PC-3 (cell line): ENCODE measurements at regions of chr16 and their contacts with region 1.

Region 1: DNA sequence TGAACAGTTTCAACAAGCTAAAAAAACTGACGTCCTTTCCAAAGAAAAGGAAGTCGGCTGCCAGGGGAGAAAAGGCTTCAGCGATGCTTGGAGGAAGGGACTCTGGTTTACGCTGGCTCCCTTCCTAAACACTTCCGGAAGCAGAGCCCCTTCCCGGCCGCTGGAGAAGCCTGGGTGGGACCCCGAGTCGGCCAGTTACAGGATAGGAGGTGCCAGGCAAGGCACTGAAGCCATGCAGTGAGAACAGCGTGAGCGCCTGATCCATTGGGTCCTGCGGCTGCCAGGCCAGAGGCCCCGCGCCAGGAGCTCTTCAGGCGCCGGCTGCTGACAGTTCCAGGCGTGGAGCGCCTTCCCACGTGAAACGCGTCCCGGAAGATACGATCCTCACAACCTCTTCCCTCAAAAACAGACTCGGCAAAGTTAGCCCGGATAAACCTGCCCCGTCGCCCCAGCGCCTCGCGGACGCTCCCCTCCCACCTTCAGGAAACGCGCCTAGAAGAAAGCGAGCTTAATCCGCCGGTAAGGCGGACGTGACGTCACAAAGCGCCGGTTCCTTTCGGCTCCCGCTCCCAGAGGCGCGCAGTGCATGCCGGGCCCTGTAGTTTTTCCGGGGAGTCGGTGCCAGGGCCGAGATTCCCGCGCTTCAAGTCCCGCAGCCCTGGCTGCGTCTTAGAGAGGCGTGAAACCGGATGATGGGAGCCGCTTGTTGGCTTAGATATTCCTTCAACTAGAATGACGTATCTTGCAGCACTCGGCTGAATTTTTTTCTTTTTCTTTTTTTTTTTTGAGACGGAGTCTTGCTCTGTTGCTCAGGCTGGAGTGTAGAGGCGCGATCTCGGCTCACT is at the start of gene ADAT1:
- DNase-seq: peak; percentile 96
- ATAC-seq: peak; percentile 94
- H3K4me3 ChIP-seq: peak within 1 kb of the TSS; percentile 96
- H3K27ac ChIP-seq: peak within 1 kb of the TSS; percentile 68
- H3K4me1 ChIP-seq: peaks cover 11% of the 10 kb centered on the region; the same call in 1 of the 2 replicates
- H3K27me3 ChIP-seq: no peaks in the 10 kb centered on the region
- CTCF ChIP-seq: no peak
- total RNA-seq, gene ADAT1: 42.8 and 60.1 TPM in 2 replicates

Region 2: DNA sequence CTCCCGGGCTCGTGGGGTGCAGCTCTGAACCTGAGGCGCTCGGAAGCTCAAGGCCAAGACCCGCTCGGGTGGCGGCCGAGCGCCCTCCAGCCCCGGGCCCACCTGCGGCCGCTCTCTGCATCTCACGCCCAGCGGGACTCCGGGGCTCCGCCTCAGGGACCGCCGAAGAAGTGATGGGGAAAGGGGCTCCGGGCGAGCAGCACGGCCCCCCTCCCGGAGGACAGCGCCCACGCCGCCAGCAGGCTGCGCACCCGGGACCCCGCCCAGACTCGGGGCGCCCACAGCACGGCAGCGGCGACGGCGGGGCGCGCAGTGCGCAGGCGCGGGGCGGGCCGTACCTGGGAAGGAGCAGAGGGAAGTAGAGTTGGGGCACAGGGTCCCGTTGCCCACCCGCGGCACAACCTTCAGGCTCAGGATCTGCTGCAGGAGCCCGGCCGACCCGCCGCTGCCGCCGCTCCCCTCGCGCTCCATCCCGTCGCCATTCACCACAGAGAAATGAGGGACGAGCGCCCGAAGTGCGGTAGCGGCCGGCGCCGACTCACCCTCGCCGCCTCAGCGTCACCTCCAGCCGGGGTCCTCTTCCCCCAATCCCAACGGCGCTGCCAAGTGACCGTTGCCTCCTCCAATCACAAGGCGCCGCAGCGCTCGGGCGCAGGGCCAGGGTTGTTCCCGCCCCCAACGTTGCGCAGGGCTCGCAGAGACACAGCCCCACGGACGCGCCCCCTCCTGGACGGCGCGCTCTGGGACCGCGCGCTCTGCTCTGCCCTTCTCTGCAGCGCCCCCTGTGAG is 158.7 kb before region 1 on chr16 and contains the start of gene TMEM170A:
- CTCF ChIA-PET with region 1: no interaction called
- POLR2A ChIA-PET with region 1: no interaction called
- intact Hi-C with region 1: loop called (anchors 5 kb)
- DNase-seq: peak; percentile 96
- ATAC-seq: peak; percentile 92
- H3K4me3 ChIP-seq: peak within 1 kb of the TSS; percentile 89
- H3K27ac ChIP-seq: peak within 1 kb of the TSS; percentile 64
- H3K4me1 ChIP-seq: peaks cover 17% of the 10 kb centered on the region; the same call in 1 of the 2 replicates
- H3K27me3 ChIP-seq: no peaks in the 10 kb centered on the region
- CTCF ChIP-seq: peak; percentile 98
- total RNA-seq, gene TMEM170A: 10.1 and 18.6 TPM in 2 replicates

Region 3: GRCh38 chr16:75555707-75556430 is 67.1 kb before region 1 on chr16 and contains the start of gene TMEM231:
- CTCF ChIA-PET with region 1: no interaction called
- POLR2A ChIA-PET with region 1: no interaction called
- intact Hi-C with region 1: loop called (anchors 5 kb)
- DNase-seq: peak; percentile 83
- ATAC-seq: peak; percentile 88
- H3K4me3 ChIP-seq: peak within 1 kb of the TSS; percentile 96
- H3K27ac ChIP-seq: peak within 1 kb of the TSS; percentile 37
- H3K4me1 ChIP-seq: peaks cover 5% of the 10 kb centered on the region; the same call in 1 of the 2 replicates
- H3K27me3 ChIP-seq: no peaks in the 10 kb centered on the region
- CTCF ChIP-seq: no peak
- total RNA-seq, gene TMEM231: 9.6 and 20.2 TPM in 2 replicates

Region 4: DNA sequence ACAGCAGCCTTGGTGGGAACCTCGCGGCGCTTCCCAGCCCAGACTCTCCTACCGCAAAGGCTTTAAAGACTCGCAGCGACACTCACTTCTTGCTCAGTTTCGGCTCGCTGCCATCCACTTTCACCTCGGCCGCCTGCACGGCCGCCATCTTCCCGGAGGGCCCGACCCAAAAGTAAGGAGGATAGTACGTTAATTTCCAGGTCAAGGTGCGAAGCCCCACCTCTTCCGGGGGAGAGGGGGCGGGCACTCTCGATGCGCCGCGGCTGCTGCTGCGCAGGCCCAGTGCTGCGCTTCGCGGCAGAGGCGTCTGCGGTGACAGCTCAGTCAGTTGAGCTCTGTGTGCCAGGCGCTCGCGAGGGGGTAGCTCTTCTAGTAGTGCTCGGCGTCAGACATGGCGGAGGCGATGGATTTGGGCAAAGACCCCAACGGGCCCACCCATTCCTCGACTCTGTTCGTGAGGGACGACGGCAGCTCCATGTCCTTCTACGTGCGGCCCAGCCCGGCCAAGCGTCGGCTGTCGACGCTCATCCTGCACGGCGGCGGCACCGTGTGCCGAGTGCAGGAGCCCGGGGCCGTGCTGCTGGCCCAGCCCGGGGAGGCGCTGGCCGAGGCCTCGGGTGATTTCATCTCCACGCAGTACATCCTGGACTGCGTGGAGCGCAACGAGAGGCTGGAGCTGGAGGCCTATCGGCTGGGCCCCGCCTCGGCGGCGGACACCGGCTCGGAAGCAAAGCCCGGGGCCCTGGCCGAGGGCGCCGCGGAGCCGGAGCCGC is 24.7 kb after region 1 on chr16 and contains the starts of genes KARS1 and TERF2IP:
- CTCF ChIA-PET with region 1: interaction called, 3 read pairs
- POLR2A ChIA-PET with region 1: interaction called, 9 read pairs
- intact Hi-C with region 1: loop called (anchors 2 kb)
- DNase-seq: peak; percentile 90
- ATAC-seq: peak; percentile 91
- H3K4me3 ChIP-seq: peak within 1 kb of the TSS; percentile 100
- H3K27ac ChIP-seq: peak within 1 kb of the TSS; percentile 50
- H3K4me1 ChIP-seq: peaks cover 21% of the 10 kb centered on the region
- H3K27me3 ChIP-seq: no peaks in the 10 kb centered on the region
- CTCF ChIP-seq: no peak
- total RNA-seq, gene KARS1: 137 and 148 TPM in 2 replicates
- total RNA-seq, gene TERF2IP: 25.7 and 27.2 TPM in 2 replicates

Region 5: GRCh38 chr16:76309639-76310335 is 686.8 kb after region 1 on chr16:
- CTCF ChIA-PET with region 1: no interaction called
- POLR2A ChIA-PET with region 1: no interaction called
- intact Hi-C with region 1: no loop called
- DNase-seq: no peak
- ATAC-seq: no peak
- H3K4me3 ChIP-seq: no peak overlapping the region
- H3K27ac ChIP-seq: no peak overlapping the region
- H3K4me1 ChIP-seq: no peaks in the 10 kb centered on the region
- H3K27me3 ChIP-seq: no peaks in the 10 kb centered on the region
- CTCF ChIP-seq: no peak